ENCODE measurements at regions of chr1 and their contacts with region 1.

Region 1: GRCh38 chr1:171245458-171246064 is 2.7 kb upstream of the FMO1 start:
- DNase-seq: no peak
- ATAC-seq: peak; percentile 72

Region 2: DNA sequence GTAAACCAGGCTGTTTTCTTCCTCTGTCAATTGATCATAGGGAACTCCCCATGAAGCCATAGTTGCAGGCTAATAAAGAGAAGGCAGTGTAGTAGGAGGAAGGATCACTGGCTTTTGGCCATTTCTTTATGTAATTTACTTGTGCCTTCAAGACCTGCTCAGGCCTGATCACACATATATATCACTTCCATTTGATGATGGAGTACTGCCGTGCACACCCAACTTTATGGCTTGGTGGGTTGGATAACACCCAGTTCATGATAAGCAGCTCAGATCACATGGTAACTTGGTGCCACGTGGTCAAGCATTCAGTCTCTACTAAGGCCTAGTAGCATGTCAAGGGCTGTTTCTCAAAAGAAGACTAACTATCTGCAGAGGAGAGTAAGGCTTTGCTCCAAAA is 306.1 kb before region 1 on chr1:
- intact Hi-C with region 1: no loop called
- DNase-seq: no peak
- ATAC-seq: no peak

Region 3: DNA sequence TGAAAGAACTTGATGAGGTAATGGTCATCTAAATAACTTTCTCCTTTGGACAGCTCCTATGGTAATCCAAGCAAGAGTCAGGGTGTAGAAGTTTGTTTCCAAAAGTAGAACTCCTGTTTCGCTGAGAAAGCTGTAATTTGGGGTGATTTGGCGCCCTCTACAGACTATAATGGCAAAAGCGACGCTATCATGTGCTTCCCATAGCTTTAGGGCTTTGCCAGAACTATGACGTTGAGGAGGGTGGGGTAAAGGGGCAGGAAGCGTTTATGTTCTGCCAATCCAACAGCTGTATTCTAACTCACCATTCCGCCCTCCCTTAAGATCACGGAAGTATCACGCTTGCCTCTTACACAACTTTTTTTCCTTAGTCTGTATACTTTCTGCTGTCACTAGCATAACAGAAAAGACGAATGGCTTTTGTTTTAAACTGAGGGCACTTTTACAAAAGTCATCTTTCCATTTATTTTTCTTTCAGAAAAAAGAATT is 68.3 kb after region 1 on chr1 and contains the start of gene FMO4:
- intact Hi-C with region 1: loop called (anchors 5 kb)
- DNase-seq: peak; percentile 53
- ATAC-seq: peak; percentile 100
- total RNA-seq, gene FMO4: 2.2 TPM

Region 4: DNA sequence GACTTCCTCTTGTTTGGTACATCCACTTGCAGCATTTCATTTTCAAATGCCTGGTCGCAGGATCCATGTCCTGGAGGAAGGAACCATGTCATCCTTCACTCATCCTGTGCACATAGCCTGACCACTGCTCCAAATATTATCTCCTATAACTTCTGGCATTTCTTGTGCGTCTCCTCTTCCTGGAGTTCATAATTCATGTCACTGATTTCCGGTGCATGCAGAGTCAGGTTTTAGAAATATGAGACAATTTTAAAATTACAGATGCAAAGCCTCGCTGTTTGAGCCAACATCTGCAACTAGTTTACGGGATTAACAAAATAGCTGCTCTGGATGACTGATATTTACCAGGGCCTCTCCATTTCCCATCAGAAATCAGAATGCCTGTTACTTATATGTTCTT is 863.8 kb after region 1 on chr1:
- intact Hi-C with region 1: no loop called
- DNase-seq: no peak
- ATAC-seq: no peak

Measured in left ventricle myocardium superior (tissue), 1 donor.